MCF 10A (cell line): ENCODE measurements at regions of chr3 and their contacts with region 1.

Region 1: DNA sequence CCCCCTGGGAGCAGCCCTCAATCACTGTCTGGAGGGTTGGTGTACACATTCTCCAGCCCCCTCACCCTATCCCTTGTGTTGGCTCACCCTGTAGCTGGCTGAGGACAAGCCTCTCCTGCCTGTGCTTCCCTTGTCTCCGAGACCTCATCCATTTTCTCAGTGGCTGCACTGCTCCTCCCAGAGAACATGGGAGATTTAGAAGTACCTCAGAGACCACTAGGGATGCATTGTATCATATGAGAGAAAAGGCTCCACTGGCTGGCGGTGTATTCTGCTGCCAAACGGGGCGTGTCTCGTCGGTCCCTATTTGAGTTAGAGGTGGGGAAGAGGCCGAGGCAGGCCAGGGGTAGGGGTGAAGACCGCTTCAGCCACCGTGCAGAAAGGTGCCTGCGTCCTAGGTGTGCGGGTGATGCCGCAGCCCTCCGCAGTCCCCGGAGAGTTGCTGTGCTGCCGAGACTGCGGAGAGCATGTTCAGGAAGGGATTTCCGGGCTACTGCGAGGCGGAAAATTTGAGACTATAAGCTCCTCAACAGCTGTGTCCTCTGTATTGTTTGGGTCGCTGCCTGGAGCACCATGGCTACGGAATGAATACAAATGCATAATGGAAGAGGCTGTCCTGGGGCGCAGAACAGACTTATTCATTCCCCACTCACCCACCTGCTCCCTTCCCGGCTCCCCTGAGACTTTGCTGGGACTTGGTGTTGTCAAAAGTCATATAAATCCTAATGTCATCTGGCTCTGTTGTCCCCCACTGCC is 43.8 kb downstream of the SPSB4 start:
- DNase-seq: no peak
- H3K4me3 Mint-ChIP-seq: no peak overlapping the region
- H3K27ac Mint-ChIP-seq: no peak overlapping the region
- H3K4me1 Mint-ChIP-seq: peaks cover 9% of the 10 kb centered on the region
- H3K27me3 Mint-ChIP-seq: peaks cover 11% of the 10 kb centered on the region
- CTCF ChIP-seq: no peak

Region 2: DNA sequence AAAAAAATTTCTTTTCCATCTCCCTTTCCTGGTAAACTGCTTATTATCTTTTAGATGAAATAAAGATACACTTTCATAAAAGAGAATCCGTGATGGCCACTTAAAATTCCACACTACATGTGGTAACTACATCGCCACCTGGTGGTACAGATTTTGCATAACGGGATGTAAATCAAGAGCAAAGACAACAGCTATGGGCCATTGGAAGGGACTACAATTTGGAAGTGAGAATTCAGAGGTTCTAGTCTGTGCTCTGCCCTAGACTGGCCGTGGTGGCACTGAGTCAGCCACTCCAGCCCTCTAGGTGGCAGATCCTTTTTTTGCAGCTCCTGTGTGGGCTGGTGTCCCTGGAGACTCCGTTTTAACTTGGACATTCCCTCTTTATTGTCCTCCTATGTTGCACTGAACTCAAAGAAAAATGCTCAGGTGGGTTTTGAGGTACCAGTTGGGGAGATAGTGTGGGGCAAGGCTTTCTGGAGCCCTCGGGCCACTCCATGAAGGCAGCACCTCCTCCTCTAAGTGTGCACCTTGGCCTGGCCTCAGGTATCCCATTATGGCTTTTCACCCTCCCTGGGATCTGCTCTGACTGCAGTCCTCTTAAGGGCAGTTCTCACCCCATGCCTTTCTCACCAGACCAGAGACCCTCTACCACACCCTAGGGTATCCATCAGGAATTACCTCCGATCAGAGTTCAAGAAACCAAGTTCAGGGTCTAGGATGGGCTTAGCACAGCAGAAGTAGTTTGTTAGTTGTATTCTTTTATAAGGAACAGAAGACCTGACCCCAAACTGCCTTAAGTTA is 11.1 kb after region 1 on chr3:
- CTCF ChIA-PET with region 1: interaction called, 32 read pairs
- POLR2A ChIA-PET with region 1: no interaction called
- intact Hi-C with region 1: no loop called
- DNase-seq: peak; percentile 81
- H3K4me3 Mint-ChIP-seq: no peak overlapping the region
- H3K27ac Mint-ChIP-seq: no peak overlapping the region
- H3K4me1 Mint-ChIP-seq: no peaks in the 10 kb centered on the region
- H3K27me3 Mint-ChIP-seq: no peaks in the 10 kb centered on the region
- CTCF ChIP-seq: peak; percentile 65